ENCODE measurements at regions of chr9 and their contacts with region 1.

Region 1: GRCh38 chr9:107472581-107473340 is 16.8 kb downstream of the KLF4 start:
- DNase-seq: no peak
- H3K4me3 ChIP-seq: no peak overlapping the region
- H3K27ac ChIP-seq: no peak overlapping the region
- H3K4me1 ChIP-seq: no peaks in the 10 kb centered on the region
- H3K27me3 ChIP-seq: no peaks in the 10 kb centered on the region
- CTCF ChIP-seq: no peak
- EP300 ChIP-seq: no peak
- POLR2A ChIP-seq: no peak

Region 2: DNA sequence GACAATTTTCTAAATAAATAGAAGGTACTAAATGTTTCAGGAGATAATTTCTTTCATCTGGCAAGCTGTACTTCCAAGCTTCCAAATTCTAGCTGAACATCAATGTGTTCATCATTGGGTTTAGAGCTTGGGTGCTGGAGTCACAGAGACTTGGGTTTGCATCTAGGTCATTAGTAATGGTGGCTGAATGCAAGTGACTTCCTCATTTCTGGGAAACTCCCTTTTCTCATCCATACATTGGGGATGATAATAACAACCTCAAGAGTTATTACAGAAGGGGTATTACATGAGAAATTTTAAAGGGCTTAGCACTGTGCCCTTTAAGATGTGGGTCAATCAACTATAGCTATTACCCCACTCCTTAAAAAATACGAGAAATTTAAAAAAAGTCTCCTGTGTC is 57.9 kb after region 1 on chr9:
- intact Hi-C with region 1: no loop called
- DNase-seq: no peak
- H3K4me3 ChIP-seq: no peak overlapping the region
- H3K27ac ChIP-seq: no peak overlapping the region
- H3K4me1 ChIP-seq: peaks cover 3% of the 10 kb centered on the region
- H3K27me3 ChIP-seq: no peaks in the 10 kb centered on the region
- CTCF ChIP-seq: no peak
- EP300 ChIP-seq: no peak
- POLR2A ChIP-seq: no peak

Region 3: DNA sequence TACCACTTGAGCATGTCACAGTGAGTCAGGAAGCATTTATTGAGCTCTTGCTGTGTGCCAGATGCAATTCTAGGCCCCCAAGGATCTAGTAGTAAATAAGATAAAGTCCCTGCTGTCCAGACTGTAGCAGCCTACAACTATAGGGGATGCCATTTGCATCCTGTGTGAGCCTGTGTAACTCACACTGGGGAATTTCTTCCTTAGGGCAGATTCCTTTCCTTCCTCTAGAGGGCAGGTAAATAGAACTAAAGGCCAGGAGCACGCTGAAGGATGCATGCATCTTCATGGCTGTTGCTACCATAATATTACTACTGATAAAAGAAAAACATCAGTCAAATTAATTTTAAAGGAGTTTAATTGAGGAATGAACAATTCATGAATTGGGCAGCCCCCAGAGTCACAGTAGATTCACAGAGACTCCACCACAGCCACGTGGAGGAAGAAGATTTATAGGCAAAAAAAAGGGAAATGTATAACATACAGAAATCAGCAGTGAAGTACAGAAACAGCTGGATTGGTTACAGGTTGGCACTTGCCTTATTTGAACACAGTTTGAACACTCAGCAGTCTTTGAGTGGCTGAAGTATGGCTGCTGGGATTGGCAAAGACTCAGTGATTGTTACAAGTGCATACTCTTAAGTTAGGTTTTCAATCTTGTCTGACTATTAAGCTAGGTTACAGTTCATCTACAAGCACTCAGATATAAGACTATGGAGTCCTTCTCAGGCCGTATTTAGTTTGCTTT is 1284.2 kb after region 1 on chr9:
- intact Hi-C with region 1: loop called in 1 of 4 experiments (anchors 10 kb)
- DNase-seq: no peak
- H3K4me3 ChIP-seq: no peak overlapping the region
- H3K27ac ChIP-seq: no peak overlapping the region
- H3K4me1 ChIP-seq: no peaks in the 10 kb centered on the region
- H3K27me3 ChIP-seq: no peaks in the 10 kb centered on the region
- CTCF ChIP-seq: no peak
- EP300 ChIP-seq: no peak
- POLR2A ChIP-seq: no peak

Measured in ovary (tissue), 10 donors.